ENCODE measurements at regions of chr22 and their contacts with region 1.

Region 1: DNA sequence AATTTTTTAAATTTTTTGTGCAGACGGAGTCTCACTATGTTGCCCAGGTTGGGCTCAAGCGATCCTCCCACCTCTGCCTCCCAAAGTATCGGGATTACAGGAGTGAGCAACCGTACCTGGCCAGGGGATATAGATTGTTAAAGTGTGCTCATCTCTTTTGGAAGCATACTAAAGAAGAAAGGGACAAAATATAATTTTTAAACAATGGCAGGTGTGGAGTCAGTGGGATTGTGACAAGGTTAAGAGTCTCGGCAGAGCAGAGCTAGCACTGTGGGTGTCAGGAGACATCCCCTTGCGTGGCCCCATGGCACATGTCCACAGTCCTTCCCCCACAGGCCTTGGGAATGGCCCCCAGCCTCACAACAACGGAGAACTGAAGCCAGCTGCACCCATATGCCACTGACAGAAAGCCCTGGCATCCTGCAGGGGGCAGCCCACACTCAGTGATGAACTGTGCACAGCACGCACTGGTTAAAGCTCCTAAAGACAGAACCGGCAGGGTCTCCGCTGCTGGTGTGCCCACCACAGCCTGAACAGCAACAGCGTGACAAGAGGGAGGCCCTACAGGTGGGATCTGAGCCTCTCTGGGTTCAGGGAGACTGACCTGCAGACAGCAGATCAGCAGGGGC is 29.9 kb downstream of the SERPIND1 start:
- DNase-seq: no peak
- H3K4me3 ChIP-seq: no peak overlapping the region
- H3K27ac ChIP-seq: no peak overlapping the region
- H3K4me1 ChIP-seq: no peaks in the 10 kb centered on the region
- H3K27me3 ChIP-seq: no peaks in the 10 kb centered on the region
- CTCF ChIP-seq: peak; percentile 47 to 60

Region 2: GRCh38 chr22:20380486-20380885 is 423.3 kb before region 1 on chr22:
- CTCF ChIA-PET with region 1: no interaction called
- dilution Hi-C with region 1: no loop called
- in situ Hi-C with region 1: no loop called
- intact Hi-C with region 1: no loop called
- DNase-seq: peak; percentile 60
- H3K4me3 ChIP-seq: no peak overlapping the region
- H3K27ac ChIP-seq: no peak overlapping the region
- H3K4me1 ChIP-seq: peaks cover 8% of the 10 kb centered on the region
- H3K27me3 ChIP-seq: peaks cover 2% of the 10 kb centered on the region
- CTCF ChIP-seq: no peak

Region 3: DNA sequence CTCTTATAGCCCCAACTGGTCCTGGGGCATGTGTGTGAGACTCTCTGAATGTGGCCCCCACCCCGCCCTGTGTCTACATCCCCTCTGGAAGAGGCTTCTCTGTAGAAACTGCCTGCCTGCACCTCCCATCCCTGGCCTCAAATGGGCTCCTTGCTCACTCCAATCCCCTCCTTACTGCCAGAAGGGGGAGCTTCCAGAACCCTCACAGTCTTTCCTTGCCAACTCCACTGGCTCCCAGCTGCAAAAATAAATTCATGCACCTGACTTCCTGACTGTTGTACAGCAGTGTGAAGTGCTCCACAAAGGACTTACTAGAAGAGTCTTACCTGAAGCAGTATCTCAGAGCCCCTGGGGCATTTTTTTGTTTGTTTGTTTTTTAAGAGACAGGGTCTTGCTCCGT is 45.1 kb before region 1 on chr22:
- CTCF ChIA-PET with region 1: no interaction called
- dilution Hi-C with region 1: no loop called
- in situ Hi-C with region 1: no loop called
- intact Hi-C with region 1: no loop called
- DNase-seq: no peak
- H3K4me3 ChIP-seq: no peak overlapping the region
- H3K27ac ChIP-seq: no peak overlapping the region
- H3K4me1 ChIP-seq: no peaks in the 10 kb centered on the region
- H3K27me3 ChIP-seq: no peaks in the 10 kb centered on the region
- CTCF ChIP-seq: peak in 1 of 2 donors; percentile 16

Region 4: GRCh38 chr22:20858615-20859416 is 55.0 kb after region 1 on chr22 and contains the starts of genes PI4KA and SNAP29:
- CTCF ChIA-PET with region 1: interaction called, 3 read pairs
- dilution Hi-C with region 1: no loop called
- in situ Hi-C with region 1: no loop called
- intact Hi-C with region 1: loop called (anchors 2 kb)
- DNase-seq: peak; percentile 98
- H3K4me3 ChIP-seq: peak within 1 kb of the TSS; percentile 76 to 99 (median 91)
- H3K27ac ChIP-seq: peak within 1 kb of the TSS; percentile 46
- H3K4me1 ChIP-seq: peaks cover 10% of the 10 kb centered on the region
- H3K27me3 ChIP-seq: no peaks in the 10 kb centered on the region
- CTCF ChIP-seq: no peak
- total RNA-seq, gene PI4KA: 34.3 to 50.3 TPM
- total RNA-seq, gene SNAP29: 11.8 to 25.4 TPM

Region 5: DNA sequence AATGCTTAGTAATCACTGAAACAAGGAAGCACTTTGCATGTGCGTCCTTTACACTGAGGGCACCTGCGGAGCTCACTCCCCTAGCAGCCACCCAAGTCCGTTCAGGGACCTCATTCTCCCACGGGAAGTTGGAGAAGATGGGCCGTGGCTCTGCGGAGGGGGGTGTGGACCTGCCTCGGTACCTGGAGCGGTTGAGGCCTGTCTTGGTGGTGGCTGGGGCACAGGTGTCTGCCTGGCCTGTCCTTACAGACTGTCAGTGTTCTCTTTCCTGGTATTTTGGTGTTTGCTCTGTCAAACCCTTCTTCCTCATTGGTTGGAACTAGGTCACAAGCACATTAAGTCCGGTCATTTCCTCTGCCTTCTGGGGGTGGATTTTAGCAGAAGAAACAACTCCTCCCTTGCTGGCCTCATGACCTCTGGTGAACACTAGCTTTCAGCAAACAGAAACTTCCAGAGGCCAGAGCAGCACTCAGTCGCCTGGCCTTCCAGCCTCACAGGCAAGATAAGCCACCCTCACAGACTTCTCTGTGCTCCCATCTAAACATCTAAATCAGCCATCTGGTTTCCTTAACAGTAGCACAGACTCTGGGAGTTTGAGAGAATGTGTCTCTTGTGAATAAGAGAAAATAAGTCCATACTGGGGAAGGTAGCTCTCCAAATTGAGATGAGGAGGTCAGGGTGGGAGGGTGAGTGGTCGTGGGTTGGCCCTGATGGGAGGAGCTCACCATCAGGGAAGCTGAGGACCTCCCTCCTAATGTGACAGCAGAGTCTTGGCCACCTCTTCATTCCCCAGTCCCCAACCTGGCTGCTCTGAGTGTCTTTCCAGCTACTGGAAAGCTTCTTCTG is 63.6 kb after region 1 on chr22:
- CTCF ChIA-PET with region 1: interaction called, 3 read pairs
- dilution Hi-C with region 1: loop called (anchors 5 kb)
- in situ Hi-C with region 1: no loop called
- intact Hi-C with region 1: no loop called
- DNase-seq: no peak
- H3K4me3 ChIP-seq: no peak overlapping the region
- H3K27ac ChIP-seq: no peak overlapping the region
- H3K4me1 ChIP-seq: peaks cover 4% of the 10 kb centered on the region
- H3K27me3 ChIP-seq: no peaks in the 10 kb centered on the region
- CTCF ChIP-seq: no peak

Measured in mammary epithelial cell (primary cell).